ENCODE measurements at regions of chr6 and their contacts with region 1.

Region 1: GRCh38 chr6:99868074-99868702 is 125.8 kb downstream of the MCHR2 start:
- DNase-seq: peak; percentile 85
- H3K4me3 Mint-ChIP-seq: no peak overlapping the region
- H3K27ac Mint-ChIP-seq: no peak overlapping the region
- H3K4me1 Mint-ChIP-seq: no peaks in the 10 kb centered on the region
- H3K27me3 Mint-ChIP-seq: peaks cover 13% of the 10 kb centered on the region
- CTCF ChIP-seq: peak; percentile 86

Region 2: GRCh38 chr6:99852031-99852430 is 16.2 kb before region 1 on chr6:
- CTCF ChIA-PET with region 1: interaction called, 21 read pairs
- POLR2A ChIA-PET with region 1: interaction called, 4 read pairs
- intact Hi-C with region 1: no loop called
- DNase-seq: no peak
- H3K4me3 Mint-ChIP-seq: no peak overlapping the region
- H3K27ac Mint-ChIP-seq: no peak overlapping the region
- H3K4me1 Mint-ChIP-seq: no peaks in the 10 kb centered on the region
- H3K27me3 Mint-ChIP-seq: no peaks in the 10 kb centered on the region
- CTCF ChIP-seq: no peak

Region 3: DNA sequence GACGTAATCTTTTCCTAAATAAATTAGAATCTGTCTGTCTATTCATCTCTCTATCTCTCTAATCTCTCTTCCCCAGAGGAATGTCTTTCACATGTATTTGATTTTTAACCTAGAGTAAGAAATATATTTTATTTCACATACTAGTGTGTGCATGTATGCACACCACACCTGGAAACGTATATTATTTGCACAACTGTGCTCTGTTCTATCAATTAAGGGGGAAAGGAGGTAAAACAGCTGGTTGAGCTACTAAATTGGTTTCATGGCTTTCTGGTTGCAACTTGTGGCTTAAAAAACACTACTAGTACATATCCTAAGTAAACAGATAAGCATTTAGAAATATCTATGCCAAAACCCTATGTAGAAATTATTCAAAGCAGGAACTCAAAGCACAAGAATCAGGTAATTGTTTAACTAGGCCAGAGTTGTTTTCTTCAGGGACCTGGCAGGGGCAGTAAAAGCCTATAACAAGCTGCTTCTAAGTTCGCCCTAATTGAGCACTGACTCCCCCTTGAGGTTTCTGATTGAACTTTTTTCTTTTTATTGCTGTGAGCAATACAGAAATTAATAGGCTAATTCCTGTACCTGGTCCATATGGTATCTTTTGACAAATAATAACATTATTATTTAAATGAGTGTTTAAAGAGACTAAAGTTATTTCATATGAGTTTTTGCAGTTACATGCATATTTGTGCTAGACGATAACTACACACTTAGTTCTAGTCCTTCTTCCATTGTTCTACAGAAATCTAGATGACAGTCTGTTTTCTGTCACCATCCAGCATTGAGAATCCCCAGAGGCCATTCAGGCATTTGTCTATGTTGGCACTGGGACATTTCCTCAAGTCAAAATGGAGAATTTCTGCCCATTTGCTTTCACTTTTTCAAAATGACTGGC is 37.3 kb after region 1 on chr6:
- CTCF ChIA-PET with region 1: interaction called, 57 read pairs
- POLR2A ChIA-PET with region 1: no interaction called
- intact Hi-C with region 1: loop called (anchors 1 kb)
- DNase-seq: peak; percentile 71
- H3K4me3 Mint-ChIP-seq: no peak overlapping the region
- H3K27ac Mint-ChIP-seq: no peak overlapping the region
- H3K4me1 Mint-ChIP-seq: no peaks in the 10 kb centered on the region
- H3K27me3 Mint-ChIP-seq: no peaks in the 10 kb centered on the region
- CTCF ChIP-seq: peak; percentile 74

Region 4: DNA sequence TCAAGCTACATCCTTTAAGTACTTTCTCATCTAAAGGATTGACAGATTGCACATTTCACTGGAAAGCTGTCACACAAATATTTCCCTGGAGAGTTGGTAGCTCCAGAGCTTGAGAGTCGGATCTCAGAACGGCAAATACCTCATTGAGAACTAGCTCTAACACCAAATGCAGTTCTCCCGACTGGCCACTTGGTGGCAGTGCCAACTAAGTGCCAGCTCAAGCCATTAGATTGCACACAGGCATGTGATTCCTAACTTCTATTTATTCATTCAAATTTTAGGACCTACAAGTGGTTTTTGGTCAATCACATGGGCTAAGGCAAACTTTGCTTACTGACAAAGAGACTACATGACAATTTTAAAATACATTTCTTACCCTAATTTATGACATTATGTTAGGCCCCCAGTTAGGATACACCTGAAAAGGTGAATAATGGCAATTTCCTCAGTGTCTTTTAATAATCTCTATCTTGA is 133.8 kb after region 1 on chr6:
- CTCF ChIA-PET with region 1: interaction called, 82 read pairs
- POLR2A ChIA-PET with region 1: no interaction called
- intact Hi-C with region 1: loop called (anchors 1 kb)
- DNase-seq: peak; percentile 66
- H3K4me3 Mint-ChIP-seq: no peak overlapping the region
- H3K27ac Mint-ChIP-seq: no peak overlapping the region
- H3K4me1 Mint-ChIP-seq: peaks cover 8% of the 10 kb centered on the region
- H3K27me3 Mint-ChIP-seq: no peaks in the 10 kb centered on the region
- CTCF ChIP-seq: peak; percentile 91

Region 5: GRCh38 chr6:100099189-100100074 is 231.2 kb after region 1 on chr6:
- CTCF ChIA-PET with region 1: interaction called, 174 read pairs
- POLR2A ChIA-PET with region 1: interaction called, 3 read pairs
- intact Hi-C with region 1: loop called (anchors 1 kb)
- DNase-seq: peak; percentile 38
- H3K4me3 Mint-ChIP-seq: no peak overlapping the region
- H3K27ac Mint-ChIP-seq: no peak overlapping the region
- H3K4me1 Mint-ChIP-seq: peaks cover 4% of the 10 kb centered on the region
- H3K27me3 Mint-ChIP-seq: no peaks in the 10 kb centered on the region
- CTCF ChIP-seq: peak; percentile 26

Region 6: GRCh38 chr6:100479179-100480035 is 611.2 kb after region 1 on chr6:
- CTCF ChIA-PET with region 1: interaction called, 5 read pairs
- POLR2A ChIA-PET with region 1: no interaction called
- intact Hi-C with region 1: loop called (anchors 5 kb)
- DNase-seq: peak; percentile 55
- H3K4me3 Mint-ChIP-seq: no peak overlapping the region
- H3K27ac Mint-ChIP-seq: no peak overlapping the region
- H3K4me1 Mint-ChIP-seq: peaks cover 8% of the 10 kb centered on the region
- H3K27me3 Mint-ChIP-seq: no peaks in the 10 kb centered on the region
- CTCF ChIP-seq: peak; percentile 79